Activated CD4-positive, alpha-beta T cell treated with anti-CD3 and anti-CD28 coated beads, Interleukin-2, amount 10 ng/mL, durations not matched to agents 7 days and 5 days (primary cell): ENCODE measurements at regions of chr16 and their contacts with region 1.

Region 1: GRCh38 chr16:15874745-15875314 is 13.6 kb downstream of the CEP20 start:
- DNase-seq: peak; percentile 20
- H3K4me3 Mint-ChIP-seq: no peak overlapping the region
- H3K27ac Mint-ChIP-seq: no peak overlapping the region
- H3K4me1 Mint-ChIP-seq: peaks cover 11% of the 10 kb centered on the region
- H3K27me3 Mint-ChIP-seq: no peaks in the 10 kb centered on the region

Region 2: GRCh38 chr16:15888072-15888976 is 13.5 kb after region 1 on chr16 and contains the start of gene CEP20:
- CTCF ChIA-PET with region 1: interaction called, 10 read pairs
- POLR2A ChIA-PET with region 1: no interaction called
- DNase-seq: peak; percentile 100
- H3K4me3 Mint-ChIP-seq: peak within 1 kb of the TSS; percentile 100
- H3K27ac Mint-ChIP-seq: peak within 1 kb of the TSS; percentile 99
- H3K4me1 Mint-ChIP-seq: peaks cover 35% of the 10 kb centered on the region
- H3K27me3 Mint-ChIP-seq: no peaks in the 10 kb centered on the region
- total RNA-seq, gene CEP20: 46.2 to 59.4 TPM